Aorta (tissue), 5 donors: ENCODE measurements at regions of chr1 and their contacts with region 1.

Region 1: GRCh38 chr1:153698020-153698931 is 19.8 kb downstream of the NPR1 start:
- DNase-seq: peak; percentile 92 to 94
- ATAC-seq: peak; percentile 91
- H3K4me3 ChIP-seq: no peak overlapping the region
- H3K27ac ChIP-seq: peak overlapping the region; percentile 96 to 97
- H3K4me1 ChIP-seq: peaks cover 0 to 3% of the 10 kb centered on the region in 2 donors
- H3K27me3 ChIP-seq: no peaks in the 10 kb centered on the region

Region 2: GRCh38 chr1:153119491-153119971 is 578.7 kb before region 1 on chr1:
- intact Hi-C with region 1: no loop called
- DNase-seq: no peak
- ATAC-seq: no peak
- H3K4me3 ChIP-seq: no peak overlapping the region
- H3K27ac ChIP-seq: no peak overlapping the region
- H3K4me1 ChIP-seq: no peaks in the 10 kb centered on the region
- H3K27me3 ChIP-seq: peaks cover 0 to 2% of the 10 kb centered on the region in 2 donors

Region 3: GRCh38 chr1:153261281-153262069 is 436.8 kb before region 1 on chr1:
- intact Hi-C with region 1: no loop called
- DNase-seq: peak; percentile 64 to 85
- ATAC-seq: peak; percentile 64
- H3K4me3 ChIP-seq: peak overlapping the region; percentile 54 to 56
- H3K27ac ChIP-seq: no peak overlapping the region
- H3K4me1 ChIP-seq: no peaks in the 10 kb centered on the region
- H3K27me3 ChIP-seq: no peaks in the 10 kb centered on the region

Region 4: GRCh38 chr1:153598309-153599172 is 99.7 kb before region 1 on chr1:
- intact Hi-C with region 1: no loop called
- DNase-seq: no peak
- ATAC-seq: no peak
- H3K4me3 ChIP-seq: no peak overlapping the region
- H3K27ac ChIP-seq: no peak overlapping the region
- H3K4me1 ChIP-seq: no peaks in the 10 kb centered on the region
- H3K27me3 ChIP-seq: no peaks in the 10 kb centered on the region

Region 5: GRCh38 chr1:153727463-153728304 is 29.4 kb after region 1 on chr1 and contains the start of gene INTS3:
- intact Hi-C with region 1: loop called in 1 of 2 experiments (anchors 1 kb)
- DNase-seq: peak; percentile 100
- ATAC-seq: peak; percentile 100
- H3K4me3 ChIP-seq: peak within 1 kb of the TSS; percentile 82 to 89
- H3K27ac ChIP-seq: peak within 1 kb of the TSS; percentile 84 to 99
- H3K4me1 ChIP-seq: no peaks in the 10 kb centered on the region
- H3K27me3 ChIP-seq: no peaks in the 10 kb centered on the region
- total RNA-seq, gene INTS3: 52.2 to 76.7 TPM